Kidney (tissue), 22 donors: ENCODE measurements at regions of chr2 and their contacts with region 1.

Region 1: DNA sequence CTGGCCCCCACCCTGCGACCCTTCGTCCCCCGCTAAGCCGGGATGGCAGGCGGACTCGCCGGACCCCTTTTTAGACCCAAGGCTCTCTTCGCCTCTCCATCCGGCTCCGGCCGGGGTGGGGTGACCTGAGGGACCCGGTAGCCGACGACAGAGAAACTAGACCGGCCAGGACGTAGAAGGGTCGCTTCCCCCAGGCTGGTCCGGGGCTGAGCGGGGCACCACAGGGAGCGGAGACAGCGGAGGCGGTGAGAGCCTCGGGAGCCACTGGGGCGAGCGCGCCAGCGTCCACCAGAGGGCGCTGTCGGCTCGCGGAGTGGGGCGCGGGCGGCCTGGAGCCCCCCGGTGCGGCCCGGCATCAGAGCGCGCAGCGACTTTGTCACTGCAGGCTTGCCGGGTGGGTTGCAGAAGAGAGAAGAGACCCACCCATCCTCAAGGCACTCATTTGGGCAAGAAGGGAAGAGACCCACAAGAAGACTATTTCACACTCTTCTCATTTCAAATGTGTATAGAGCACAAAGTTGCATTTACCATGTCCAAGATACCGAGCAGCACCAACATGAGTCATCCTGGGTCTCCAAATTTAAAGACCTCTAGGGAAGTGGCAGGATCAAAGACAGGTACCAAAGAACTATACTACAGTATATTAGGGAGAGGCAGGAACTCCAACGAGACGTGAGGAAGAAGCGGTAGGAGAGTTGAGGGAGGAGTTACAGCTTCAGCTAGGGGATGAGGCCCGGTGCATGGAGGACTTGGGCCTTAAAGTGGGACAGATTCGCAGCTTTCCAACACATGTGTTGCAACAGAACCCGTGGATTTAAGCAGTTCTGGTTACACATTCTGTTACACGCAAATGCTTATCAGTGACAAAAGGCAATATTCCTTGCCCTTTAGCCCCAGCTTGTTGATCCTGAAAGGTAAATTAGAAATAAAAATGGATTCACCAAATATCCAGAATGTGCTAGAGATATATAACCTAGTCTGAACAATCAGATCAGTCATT is 7.6 kb upstream of the PRKCE start:
- DNase-seq: peak; percentile 73 to 88 (median 83)
- H3K4me3 ChIP-seq: peak overlapping the region; percentile 7 to 70 (median 51)
- H3K27ac ChIP-seq: no peak overlapping the region
- H3K4me1 ChIP-seq: peaks cover 6 to 18% (median 10%) of the 10 kb centered on the region in 3 donors
- H3K27me3 ChIP-seq: no peaks in the 10 kb centered on the region
- CTCF ChIP-seq: peak; percentile 94

Region 2: GRCh38 chr2:45778720-45779171 is 134.9 kb after region 1 on chr2:
- intact Hi-C with region 1: loop called (anchors 10 kb)
- DNase-seq: peak in 3 of 5 donors; percentile 47 to 58 (median 53)
- H3K4me3 ChIP-seq: peak overlapping the region in 2 of 3 donors; percentile 21 to 28
- H3K27ac ChIP-seq: no peak overlapping the region
- H3K4me1 ChIP-seq: peaks cover 0 to 8% (median 0%) of the 10 kb centered on the region in 3 donors
- H3K27me3 ChIP-seq: no peaks in the 10 kb centered on the region
- CTCF ChIP-seq: peak; percentile 69

Region 3: GRCh38 chr2:45935791-45936622 is 292.2 kb after region 1 on chr2:
- intact Hi-C with region 1: loop called (anchors 5 kb)
- DNase-seq: peak; percentile 86 to 98 (median 90)
- H3K4me3 ChIP-seq: no peak overlapping the region
- H3K27ac ChIP-seq: peak overlapping the region; percentile 34 to 44
- H3K4me1 ChIP-seq: peaks cover 0 to 13% (median 12%) of the 10 kb centered on the region in 3 donors
- H3K27me3 ChIP-seq: no peaks in the 10 kb centered on the region
- CTCF ChIP-seq: peak; percentile 73